B cell (primary cell): ENCODE measurements at regions of chr7 and their contacts with region 1.

Region 1: DNA sequence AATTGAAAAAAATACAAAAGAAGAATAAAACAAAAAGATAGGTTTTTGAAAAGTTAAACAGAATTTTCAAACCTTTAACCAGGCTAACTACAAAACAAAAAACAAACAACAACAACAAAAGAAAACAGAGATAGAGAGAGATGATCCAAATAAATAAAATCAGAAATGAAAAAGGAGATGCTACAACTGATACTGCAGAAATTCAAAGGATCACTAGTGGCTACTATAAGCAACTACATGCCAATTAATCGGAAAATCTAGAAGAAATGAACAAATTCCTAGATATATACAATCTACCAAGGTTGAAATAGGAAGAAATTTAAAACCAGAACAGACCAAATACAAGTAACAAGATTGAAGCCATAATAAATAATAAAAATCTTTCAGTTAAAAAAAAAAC is 326.8 kb upstream of the VSTM2A start:
- DNase-seq: no peak
- ATAC-seq: no peak
- H3K4me3 ChIP-seq: no peak overlapping the region
- H3K4me3 Mint-ChIP-seq: no peak overlapping the region
- H3K27ac ChIP-seq: no peak overlapping the region
- H3K27ac Mint-ChIP-seq: no peak overlapping the region
- H3K4me1 ChIP-seq: no peaks in the 10 kb centered on the region
- H3K4me1 Mint-ChIP-seq: no peaks in the 10 kb centered on the region
- H3K27me3 ChIP-seq: no peaks in the 10 kb centered on the region
- H3K27me3 Mint-ChIP-seq: no peaks in the 10 kb centered on the region
- CTCF ChIP-seq: no peak

Region 2: DNA sequence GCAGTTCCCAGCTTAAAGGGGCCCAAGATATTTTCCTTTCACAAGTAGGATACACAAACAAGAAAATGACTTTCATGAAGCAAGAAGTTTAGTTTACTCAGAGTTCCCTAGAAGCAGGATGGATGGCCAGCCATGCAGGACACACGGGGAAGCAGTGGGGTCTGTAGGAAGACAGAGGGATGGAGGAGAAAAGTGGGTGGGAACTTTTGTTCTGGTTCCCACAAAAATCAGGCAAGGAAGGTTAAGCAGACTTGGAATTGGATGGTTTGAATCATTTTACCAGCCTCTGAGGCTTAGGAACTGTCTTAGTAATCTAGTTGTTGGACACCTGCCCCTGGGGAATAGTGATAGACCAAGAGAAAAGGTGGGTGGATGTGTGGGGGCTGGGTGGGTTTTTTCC is 63.4 kb after region 1 on chr7:
- CTCF ChIA-PET with region 1: no interaction called
- POLR2A ChIA-PET with region 1: no interaction called
- intact Hi-C with region 1: no loop called
- DNase-seq: no peak
- ATAC-seq: no peak
- H3K4me3 ChIP-seq: no peak overlapping the region
- H3K4me3 Mint-ChIP-seq: no peak overlapping the region
- H3K27ac ChIP-seq: no peak overlapping the region
- H3K27ac Mint-ChIP-seq: no peak overlapping the region
- H3K4me1 ChIP-seq: no peaks in the 10 kb centered on the region
- H3K4me1 Mint-ChIP-seq: no peaks in the 10 kb centered on the region
- H3K27me3 ChIP-seq: no peaks in the 10 kb centered on the region
- H3K27me3 Mint-ChIP-seq: no peaks in the 10 kb centered on the region
- CTCF ChIP-seq: no peak

Region 3: DNA sequence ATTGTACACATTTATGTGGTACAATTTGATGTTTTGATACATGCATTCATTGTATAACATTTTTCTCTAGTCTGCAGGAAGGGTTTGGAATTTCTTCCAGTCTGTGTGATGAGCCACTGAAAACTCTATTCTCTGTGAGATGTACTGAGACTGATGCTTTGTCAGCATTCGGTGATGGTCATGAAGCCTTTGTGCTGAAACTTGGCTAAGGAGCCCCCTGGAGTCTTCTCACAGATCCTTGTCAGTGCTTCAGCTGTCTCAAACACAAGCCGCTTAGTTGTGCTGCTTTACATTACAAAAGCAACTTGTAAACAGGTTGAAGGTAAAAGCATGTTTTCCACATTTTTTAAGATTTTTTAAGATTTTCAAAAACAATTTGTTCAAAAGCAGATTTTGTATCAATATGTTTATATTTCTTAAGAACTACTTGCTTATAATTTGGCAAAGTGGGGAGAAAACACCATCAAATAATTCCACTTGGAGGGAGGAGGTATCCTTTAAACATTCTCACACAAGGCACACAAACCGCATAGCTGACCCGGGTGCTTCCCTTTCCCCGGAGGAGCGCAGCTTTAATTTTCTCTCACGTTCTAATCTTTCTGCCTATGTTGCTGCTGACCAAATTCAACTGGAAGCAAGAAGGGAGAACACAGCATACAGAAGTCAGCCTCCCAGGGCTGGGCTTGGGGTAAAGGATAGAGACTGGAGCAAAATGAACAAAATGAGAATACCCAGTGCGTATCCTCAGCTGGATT is 76.9 kb after region 1 on chr7:
- CTCF ChIA-PET with region 1: no interaction called
- POLR2A ChIA-PET with region 1: no interaction called
- intact Hi-C with region 1: loop called (anchors 10 kb)
- DNase-seq: no peak
- ATAC-seq: no peak
- H3K4me3 ChIP-seq: no peak overlapping the region
- H3K4me3 Mint-ChIP-seq: no peak overlapping the region
- H3K27ac ChIP-seq: no peak overlapping the region
- H3K27ac Mint-ChIP-seq: no peak overlapping the region
- H3K4me1 ChIP-seq: no peaks in the 10 kb centered on the region
- H3K4me1 Mint-ChIP-seq: no peaks in the 10 kb centered on the region
- H3K27me3 ChIP-seq: no peaks in the 10 kb centered on the region
- H3K27me3 Mint-ChIP-seq: no peaks in the 10 kb centered on the region
- CTCF ChIP-seq: no peak